ENCODE measurements at regions of chr19 and their contacts with region 1.

Region 1: GRCh38 chr19:18388100-18388959 is 2.4 kb downstream of the GDF15 start:
- DNase-seq: peak; percentile 73
- H3K4me3 ChIP-seq: peak overlapping the region; percentile 71 to 97 (median 94)
- H3K27ac ChIP-seq: no peak overlapping the region
- H3K4me1 ChIP-seq: peaks cover 21% of the 10 kb centered on the region
- H3K27me3 ChIP-seq: no peaks in the 10 kb centered on the region
- CTCF ChIP-seq: peak; percentile 97 to 99
- POLR2A ChIP-seq: peak; percentile 32

Region 2: GRCh38 chr19:18340190-18340989 is 47.9 kb before region 1 on chr19 and contains the start of gene PGPEP1:
- CTCF ChIA-PET with region 1: interaction called, 12 read pairs
- POLR2A ChIA-PET with region 1: interaction called, 7 read pairs
- dilution Hi-C with region 1: no loop called
- intact Hi-C with region 1: no loop called
- DNase-seq: peak; percentile 65
- H3K4me3 ChIP-seq: peak within 1 kb of the TSS; percentile 17 to 91 (median 52)
- H3K27ac ChIP-seq: no peak within 1 kb of the TSS
- H3K4me1 ChIP-seq: peaks cover 11% of the 10 kb centered on the region
- H3K27me3 ChIP-seq: peaks cover 0 to 2% of the 10 kb centered on the region in 2 experiments
- CTCF ChIP-seq: no peak
- POLR2A ChIP-seq: peak; percentile 64
- total RNA-seq, gene PGPEP1: 27.2 and 30.5 TPM in 2 replicates

Region 3: GRCh38 chr19:18364826-18365528 is 23.4 kb before region 1 on chr19:
- CTCF ChIA-PET with region 1: interaction called, 52 read pairs
- POLR2A ChIA-PET with region 1: interaction called, 87 read pairs
- dilution Hi-C with region 1: no loop called
- intact Hi-C with region 1: loop called (anchors 1 kb)
- DNase-seq: peak; percentile 98
- H3K4me3 ChIP-seq: no peak overlapping the region
- H3K27ac ChIP-seq: peak overlapping the region; percentile 91
- H3K4me1 ChIP-seq: peaks cover 28% of the 10 kb centered on the region
- H3K27me3 ChIP-seq: no peaks in the 10 kb centered on the region
- CTCF ChIP-seq: no peak
- POLR2A ChIP-seq: peak; percentile 47

Region 4: DNA sequence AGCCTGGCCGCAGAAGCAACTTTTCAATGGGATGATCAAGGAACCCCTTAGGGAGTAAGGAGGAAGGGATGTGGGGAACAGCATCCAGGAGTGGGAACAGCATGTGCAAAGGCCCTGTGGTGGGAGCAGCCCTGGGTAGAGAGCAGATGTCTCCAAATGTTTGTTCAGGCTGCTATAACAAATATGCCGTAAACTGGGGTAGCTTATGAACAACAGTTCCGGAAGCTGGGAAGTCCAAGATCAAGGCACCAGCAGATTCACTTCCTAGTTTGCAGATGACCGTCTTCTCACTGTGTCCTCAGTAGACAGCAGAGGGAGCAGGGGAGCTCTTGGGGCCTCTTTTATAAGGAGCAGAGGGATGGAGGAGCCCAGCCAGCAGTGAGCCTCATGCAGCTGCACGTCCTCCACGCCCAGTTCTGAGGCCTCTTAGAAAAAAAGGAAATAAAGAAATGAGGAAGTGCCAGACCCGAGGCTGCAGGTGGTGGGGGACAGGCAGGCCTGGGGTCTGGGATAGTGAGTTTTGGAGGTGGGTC is 13.3 kb after region 1 on chr19:
- CTCF ChIA-PET with region 1: interaction called, 64 read pairs
- POLR2A ChIA-PET with region 1: interaction called, 9 read pairs
- dilution Hi-C with region 1: no loop called
- intact Hi-C with region 1: no loop called
- DNase-seq: no peak
- H3K4me3 ChIP-seq: no peak overlapping the region
- H3K27ac ChIP-seq: no peak overlapping the region
- H3K4me1 ChIP-seq: no peaks in the 10 kb centered on the region
- H3K27me3 ChIP-seq: no peaks in the 10 kb centered on the region
- CTCF ChIP-seq: peak in 1 of 2 donors; percentile 13
- POLR2A ChIP-seq: no peak

Region 5: GRCh38 chr19:18419195-18419698 is 30.9 kb after region 1 on chr19 and contains the start of gene SSBP4:
- CTCF ChIA-PET with region 1: interaction called, 33 read pairs
- POLR2A ChIA-PET with region 1: interaction called, 9 read pairs
- dilution Hi-C with region 1: no loop called
- intact Hi-C with region 1: loop called (anchors 2 kb)
- DNase-seq: peak; percentile 76
- H3K4me3 ChIP-seq: peak within 1 kb of the TSS; percentile 50 to 73 (median 53)
- H3K27ac ChIP-seq: peak within 1 kb of the TSS; percentile 54
- H3K4me1 ChIP-seq: peaks cover 46% of the 10 kb centered on the region
- H3K27me3 ChIP-seq: no peaks in the 10 kb centered on the region
- CTCF ChIP-seq: peak; percentile 19 to 31
- POLR2A ChIP-seq: peak; percentile 49
- total RNA-seq, gene SSBP4: 140 and 151 TPM in 2 replicates